ENCODE measurements at regions of chr16 and their contacts with region 1.

Region 1: DNA sequence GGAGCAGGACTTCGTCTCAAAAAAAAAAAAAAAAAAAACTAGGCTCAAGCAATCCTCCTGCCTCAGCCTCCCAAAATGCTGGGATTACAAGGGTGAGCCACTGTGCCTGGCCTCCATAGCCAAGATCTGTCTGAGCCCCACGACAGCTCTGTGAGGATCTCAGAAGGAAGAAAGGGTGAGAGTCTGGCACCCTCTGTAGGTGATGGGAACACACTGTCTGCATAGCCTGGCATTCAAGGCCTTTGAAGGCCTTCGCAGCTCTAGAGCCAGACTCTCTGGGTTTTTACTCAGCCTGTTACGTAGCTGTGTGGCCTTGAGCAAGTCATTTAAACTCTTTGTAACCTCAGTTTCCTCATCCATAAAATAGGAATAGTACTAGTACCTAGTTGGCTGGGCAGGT is 6.3 kb upstream of the XPO6 start:
- DNase-seq: peak; percentile 48 to 90 (median 60)
- ATAC-seq: peak; percentile 100
- H3K4me3 ChIP-seq: no peak overlapping the region
- H3K4me3 Mint-ChIP-seq: peak overlapping the region; percentile 51
- H3K27ac ChIP-seq: no peak overlapping the region
- H3K27ac Mint-ChIP-seq: peak overlapping the region; percentile 64
- H3K4me1 ChIP-seq: peaks cover 6% of the 10 kb centered on the region
- H3K4me1 Mint-ChIP-seq: peaks cover 6% of the 10 kb centered on the region
- H3K27me3 ChIP-seq: no peaks in the 10 kb centered on the region
- H3K27me3 Mint-ChIP-seq: no peaks in the 10 kb centered on the region
- CTCF ChIP-seq: peak; percentile 70

Region 2: GRCh38 chr16:27972500-27972899 is 245.6 kb before region 1 on chr16:
- CTCF ChIA-PET with region 1: interaction called, 8 read pairs
- POLR2A ChIA-PET with region 1: interaction called, 4 read pairs
- intact Hi-C with region 1: loop called in 1 of 2 experiments (anchors 2 kb)
- DNase-seq: peak in 12 of 14 experiments; percentile 3 to 67 (median 20)
- ATAC-seq: peak; percentile 57
- H3K4me3 ChIP-seq: no peak overlapping the region
- H3K4me3 Mint-ChIP-seq: no peak overlapping the region
- H3K27ac ChIP-seq: no peak overlapping the region
- H3K27ac Mint-ChIP-seq: no peak overlapping the region
- H3K4me1 ChIP-seq: peaks cover 5% of the 10 kb centered on the region
- H3K4me1 Mint-ChIP-seq: no peaks in the 10 kb centered on the region
- H3K27me3 ChIP-seq: peaks cover 4 to 10% of the 10 kb centered on the region in 2 experiments
- H3K27me3 Mint-ChIP-seq: peaks cover 29% of the 10 kb centered on the region
- CTCF ChIP-seq: peak; percentile 60

Region 3: DNA sequence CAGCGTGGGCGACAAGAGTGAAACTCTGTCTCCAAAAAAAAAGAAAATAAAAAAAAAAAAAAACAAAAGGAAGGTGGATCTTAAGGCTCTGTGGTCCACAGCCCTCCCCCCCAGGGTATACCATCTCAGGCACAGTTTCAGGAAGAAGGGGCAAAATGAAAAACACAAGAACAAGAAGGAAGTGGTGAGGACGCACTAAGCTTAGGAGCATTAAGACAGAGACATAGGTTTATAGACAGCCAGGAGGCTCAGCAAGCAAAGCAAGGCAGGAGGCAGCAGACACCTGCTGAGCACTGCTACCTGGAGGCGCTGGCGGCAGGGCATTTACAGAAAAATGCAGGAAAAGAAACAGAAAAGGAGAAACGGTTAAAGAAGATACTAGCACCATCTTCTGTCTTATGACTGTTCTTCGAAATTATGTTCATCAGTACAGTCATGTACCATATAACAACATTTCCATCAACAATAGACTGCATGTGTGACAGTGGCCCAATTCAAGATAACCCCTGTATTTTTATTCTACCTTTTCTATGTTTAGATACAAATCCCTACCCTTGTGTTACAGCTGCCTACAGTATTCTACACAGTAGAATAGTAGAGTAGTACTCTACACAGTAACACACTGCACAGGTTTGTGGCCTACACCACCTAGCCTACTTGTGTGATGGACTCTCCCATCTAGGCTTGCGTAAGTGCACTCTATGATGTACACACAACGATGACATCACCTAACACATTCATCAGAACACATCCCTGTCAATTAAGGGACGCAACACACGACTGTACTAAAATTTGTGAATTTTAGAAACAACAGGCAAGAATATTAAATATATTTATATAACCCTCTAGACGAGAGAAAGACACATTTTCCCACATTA is 68.9 kb before region 1 on chr16:
- CTCF ChIA-PET with region 1: interaction called, 18 read pairs
- POLR2A ChIA-PET with region 1: interaction called, 7 read pairs
- intact Hi-C with region 1: no loop called
- DNase-seq: peak in 12 of 14 experiments; percentile 14 to 76 (median 48)
- ATAC-seq: peak; percentile 90
- H3K4me3 ChIP-seq: no peak overlapping the region
- H3K4me3 Mint-ChIP-seq: peak overlapping the region; percentile 42
- H3K27ac ChIP-seq: peak overlapping the region; percentile 60 to 74
- H3K27ac Mint-ChIP-seq: peak overlapping the region; percentile 97
- H3K4me1 ChIP-seq: peaks cover 42% of the 10 kb centered on the region
- H3K4me1 Mint-ChIP-seq: peaks cover 83% of the 10 kb centered on the region
- H3K27me3 ChIP-seq: no peaks in the 10 kb centered on the region
- H3K27me3 Mint-ChIP-seq: no peaks in the 10 kb centered on the region
- CTCF ChIP-seq: peak; percentile 27

Region 4: DNA sequence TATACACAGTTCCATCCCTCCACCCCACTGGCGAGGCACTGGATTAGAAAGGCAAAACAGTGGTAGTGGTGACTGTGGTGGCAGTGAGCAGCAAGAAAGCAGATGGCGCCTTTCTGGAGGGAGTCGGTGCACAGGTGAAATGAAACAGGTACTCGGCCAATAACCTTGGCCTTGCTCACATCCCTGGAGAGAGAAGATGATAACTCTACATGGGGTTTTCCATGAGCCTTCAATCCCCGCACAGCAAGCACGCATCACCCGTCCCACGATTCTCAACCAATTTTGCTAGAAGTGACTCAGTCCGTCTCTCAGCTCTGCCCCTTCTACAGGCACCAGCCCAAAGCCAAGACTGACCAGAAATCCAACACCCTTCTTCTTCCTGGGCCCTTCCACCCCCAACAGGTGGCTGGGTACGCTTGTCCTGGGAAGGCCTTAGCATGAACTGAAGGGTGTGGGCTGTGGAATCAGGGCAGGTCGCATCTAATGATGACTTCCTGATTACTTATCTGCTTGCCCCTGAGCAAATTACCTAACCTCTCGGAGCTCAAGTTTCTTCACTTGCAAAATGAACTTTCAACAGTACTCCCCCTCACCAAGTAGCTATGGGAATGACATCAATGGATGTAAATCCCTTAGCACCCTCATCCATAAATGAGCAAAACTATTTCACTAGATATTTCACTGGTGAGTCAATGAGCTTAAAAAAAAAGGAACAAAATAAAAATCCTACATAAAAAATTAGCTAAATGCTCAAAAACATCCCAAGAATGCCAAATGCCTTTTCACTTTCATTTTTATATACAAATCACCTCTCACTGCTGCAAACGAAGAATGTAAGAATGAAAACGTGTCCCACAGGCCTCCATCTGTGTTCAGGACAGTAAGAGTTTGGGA is 24.3 kb before region 1 on chr16:
- CTCF ChIA-PET with region 1: interaction called, 15 read pairs
- POLR2A ChIA-PET with region 1: interaction called, 3 read pairs
- intact Hi-C with region 1: no loop called
- DNase-seq: peak in 8 of 14 experiments; percentile 15 to 73 (median 27)
- ATAC-seq: peak; percentile 13
- H3K4me3 ChIP-seq: peak overlapping the region; percentile 36
- H3K4me3 Mint-ChIP-seq: peak overlapping the region; percentile 74
- H3K27ac ChIP-seq: peak overlapping the region; percentile 88 to 89
- H3K27ac Mint-ChIP-seq: peak overlapping the region; percentile 93
- H3K4me1 ChIP-seq: peaks cover 78% of the 10 kb centered on the region
- H3K4me1 Mint-ChIP-seq: peaks cover 86% of the 10 kb centered on the region
- H3K27me3 ChIP-seq: no peaks in the 10 kb centered on the region
- H3K27me3 Mint-ChIP-seq: no peaks in the 10 kb centered on the region
- CTCF ChIP-seq: no peak